SK-N-SH (cell line): ENCODE measurements at regions of chr9 and their contacts with region 1.

Region 1: GRCh38 chr9:94213511-94214124 is 45.5 kb upstream of the ZNF169 start:
- DNase-seq: peak; percentile 80
- H3K4me3 ChIP-seq: no peak overlapping the region
- H3K27ac ChIP-seq: no peak overlapping the region
- H3K4me1 ChIP-seq: peaks cover 5 to 6% of the 10 kb centered on the region in 2 experiments; a peak in 1 of 4 replicates
- H3K27me3 ChIP-seq: no peaks in the 10 kb centered on the region
- CTCF ChIP-seq: peak; percentile 85
- EP300 ChIP-seq: no peak
- RAD21 ChIP-seq: peak; percentile 99

Region 2: DNA sequence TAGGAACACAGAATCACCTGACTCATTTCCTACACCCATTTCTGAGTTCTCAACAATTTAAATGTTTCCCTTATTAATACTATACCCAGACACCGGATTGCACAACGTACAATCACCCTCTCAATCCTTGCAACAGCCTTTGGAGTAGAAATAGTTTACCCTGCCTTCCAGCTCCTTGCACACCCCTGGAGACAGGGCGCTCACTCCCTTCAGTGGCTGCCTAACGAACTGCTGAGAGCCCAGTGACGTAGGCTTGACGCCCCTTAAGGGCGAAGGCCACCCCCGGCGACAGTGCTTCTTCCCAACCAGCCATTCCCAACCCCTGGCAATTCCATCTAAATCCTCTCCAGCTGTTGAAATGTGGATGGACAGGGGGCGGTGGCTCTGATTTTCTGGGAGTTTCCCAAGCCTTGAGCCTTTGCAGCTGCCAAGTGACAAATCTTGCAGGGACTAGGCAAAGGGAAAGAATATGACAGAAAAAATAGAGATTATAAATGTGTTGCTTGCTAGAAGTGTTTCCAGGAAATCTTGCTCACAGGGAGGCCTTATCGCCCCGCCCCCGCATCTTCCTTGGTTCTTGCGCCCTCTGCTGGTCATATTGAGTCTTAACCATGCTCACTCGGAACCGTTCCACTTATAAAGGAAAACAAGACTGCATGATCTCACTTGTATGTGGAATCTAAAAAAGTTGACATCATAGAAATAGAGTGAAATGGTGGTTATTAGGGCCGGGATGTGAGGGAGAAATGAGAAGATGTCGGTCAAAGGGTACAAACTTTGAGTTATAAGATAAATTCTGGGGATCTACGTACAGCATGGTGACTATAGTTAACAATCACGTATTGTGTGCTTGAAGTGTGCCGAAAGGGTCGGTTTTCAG is 250.8 kb before region 1 on chr9:
- CTCF ChIA-PET with region 1: interaction called, 14 read pairs
- POLR2A ChIA-PET with region 1: no interaction called
- DNase-seq: peak; percentile 89
- H3K4me3 ChIP-seq: peak overlapping the region in 1 of 2 experiments; percentile 28; a peak in 1 of 4 replicates
- H3K27ac ChIP-seq: no peak overlapping the region
- H3K4me1 ChIP-seq: peaks cover 0 to 12% of the 10 kb centered on the region in 2 experiments; a peak in 1 of 4 replicates
- H3K27me3 ChIP-seq: peaks cover 38% of the 10 kb centered on the region
- CTCF ChIP-seq: peak; percentile 88
- EP300 ChIP-seq: no peak
- RAD21 ChIP-seq: peak; percentile 82

Region 3: DNA sequence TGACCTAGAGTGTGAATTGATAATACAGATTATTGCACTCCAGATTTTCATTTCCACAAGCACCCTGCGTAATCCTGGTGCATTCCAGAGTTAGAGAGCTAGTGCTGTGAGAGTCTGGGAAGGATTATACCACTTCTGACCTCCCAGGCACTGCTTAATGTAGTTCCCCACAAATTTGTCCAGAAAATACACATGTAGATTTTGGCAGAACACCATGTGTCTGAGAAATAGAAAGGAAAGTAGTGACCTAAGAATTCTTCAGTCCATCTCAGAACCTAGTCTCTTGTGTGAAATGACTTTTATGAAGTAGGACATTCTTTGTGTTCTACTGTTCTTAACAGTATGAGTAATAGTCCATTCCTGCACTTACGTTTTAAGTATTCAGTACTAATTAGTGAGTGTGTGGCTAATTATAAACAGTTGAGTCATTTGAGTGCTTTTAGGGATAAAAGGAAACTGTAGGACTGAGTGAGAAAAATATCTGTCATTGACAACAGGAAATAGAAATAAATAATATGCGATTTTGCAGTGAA is 157.1 kb before region 1 on chr9:
- CTCF ChIA-PET with region 1: interaction called, 30 read pairs
- POLR2A ChIA-PET with region 1: no interaction called
- DNase-seq: no peak
- H3K4me3 ChIP-seq: no peak overlapping the region
- H3K27ac ChIP-seq: peak overlapping the region; percentile 22 to 49; a peak in 3 of 4 replicates
- H3K4me1 ChIP-seq: no peaks in the 10 kb centered on the region; a peak in 1 of 4 replicates
- H3K27me3 ChIP-seq: no peaks in the 10 kb centered on the region
- CTCF ChIP-seq: no peak
- EP300 ChIP-seq: no peak
- RAD21 ChIP-seq: no peak

Region 4: GRCh38 chr9:94076557-94076956 is 137.1 kb before region 1 on chr9:
- CTCF ChIA-PET with region 1: interaction called, 19 read pairs
- POLR2A ChIA-PET with region 1: no interaction called
- DNase-seq: no peak
- H3K4me3 ChIP-seq: no peak overlapping the region
- H3K27ac ChIP-seq: no peak overlapping the region
- H3K4me1 ChIP-seq: no peaks in the 10 kb centered on the region
- H3K27me3 ChIP-seq: no peaks in the 10 kb centered on the region
- CTCF ChIP-seq: no peak
- EP300 ChIP-seq: no peak
- RAD21 ChIP-seq: no peak

Region 5: GRCh38 chr9:94182532-94182931 is 31.1 kb before region 1 on chr9:
- CTCF ChIA-PET with region 1: interaction called, 11 read pairs
- POLR2A ChIA-PET with region 1: no interaction called
- DNase-seq: no peak
- H3K4me3 ChIP-seq: no peak overlapping the region
- H3K27ac ChIP-seq: no peak overlapping the region; a peak in 1 of 4 replicates
- H3K4me1 ChIP-seq: peaks cover 0 to 6% of the 10 kb centered on the region in 2 experiments; a peak in 2 of 4 replicates
- H3K27me3 ChIP-seq: no peaks in the 10 kb centered on the region
- CTCF ChIP-seq: no peak
- EP300 ChIP-seq: no peak
- RAD21 ChIP-seq: no peak

Region 6: DNA sequence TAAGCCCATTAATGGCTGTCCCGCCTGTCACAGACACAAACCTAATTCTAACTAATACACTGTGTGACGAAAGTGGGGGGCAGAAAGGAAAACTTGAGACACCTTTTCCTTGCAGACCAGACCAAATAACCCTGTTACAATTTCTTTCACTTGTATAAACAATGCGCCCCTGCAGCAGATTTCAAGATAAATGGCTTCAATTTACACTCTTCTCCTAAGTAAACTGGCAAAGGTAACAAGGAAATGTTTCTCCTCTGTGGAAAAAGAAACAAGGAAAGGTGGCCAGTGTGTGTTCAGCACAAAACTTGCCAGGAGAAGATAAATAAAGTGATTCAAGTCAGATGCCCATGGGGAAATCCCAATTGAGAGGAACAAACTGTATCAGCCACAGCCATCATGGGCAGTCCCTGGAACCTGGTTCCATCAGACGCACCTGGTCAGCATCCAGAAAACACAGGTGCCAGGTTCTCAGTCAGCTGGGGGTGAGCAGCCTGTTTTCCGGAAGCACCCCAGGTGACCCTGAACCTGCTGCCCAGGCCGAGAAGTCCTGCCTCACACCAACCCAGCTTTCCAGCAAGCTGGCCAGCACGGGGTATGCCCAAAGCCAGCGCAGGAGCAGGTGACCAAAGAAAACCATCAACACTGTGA is 1272.6 kb after region 1 on chr9:
- CTCF ChIA-PET with region 1: no interaction called
- POLR2A ChIA-PET with region 1: no interaction called
- DNase-seq: no peak
- H3K4me3 ChIP-seq: no peak overlapping the region
- H3K27ac ChIP-seq: no peak overlapping the region
- H3K4me1 ChIP-seq: peaks cover 0 to 5% of the 10 kb centered on the region in 2 experiments; a peak in 1 of 4 replicates
- H3K27me3 ChIP-seq: no peaks in the 10 kb centered on the region
- CTCF ChIP-seq: no peak
- EP300 ChIP-seq: no peak
- RAD21 ChIP-seq: no peak